AG04450 (cell line): ENCODE measurements at regions of chr13 and their contacts with region 1.

Region 1: GRCh38 chr13:100721885-100722512 is 47.4 kb upstream of the TMTC4 start:
- DNase-seq: peak; percentile 39
- H3K4me3 ChIP-seq: no peak overlapping the region
- H3K27ac ChIP-seq: no peak overlapping the region
- H3K27me3 ChIP-seq: no peaks in the 10 kb centered on the region
- CTCF ChIP-seq: peak; percentile 78

Region 2: GRCh38 chr13:100707818-100708740 is 13.9 kb before region 1 on chr13:
- CTCF ChIA-PET with region 1: interaction called, 10 read pairs
- POLR2A ChIA-PET with region 1: no interaction called
- DNase-seq: no peak
- H3K4me3 ChIP-seq: no peak overlapping the region
- H3K27ac ChIP-seq: no peak overlapping the region
- H3K27me3 ChIP-seq: peaks cover 2% of the 10 kb centered on the region
- CTCF ChIP-seq: no peak

Region 3: GRCh38 chr13:100734194-100734720 is 12.3 kb after region 1 on chr13:
- CTCF ChIA-PET with region 1: interaction called, 15 read pairs
- POLR2A ChIA-PET with region 1: no interaction called
- DNase-seq: no peak
- H3K4me3 ChIP-seq: no peak overlapping the region
- H3K27ac ChIP-seq: no peak overlapping the region
- H3K27me3 ChIP-seq: no peaks in the 10 kb centered on the region
- CTCF ChIP-seq: no peak

Region 4: GRCh38 chr13:100859861-100860260 is 137.9 kb after region 1 on chr13:
- CTCF ChIA-PET with region 1: no interaction called
- POLR2A ChIA-PET with region 1: no interaction called
- DNase-seq: no peak
- H3K4me3 ChIP-seq: no peak overlapping the region
- H3K27ac ChIP-seq: no peak overlapping the region
- H3K27me3 ChIP-seq: no peaks in the 10 kb centered on the region
- CTCF ChIP-seq: no peak

Region 5: GRCh38 chr13:100941377-100942368 is 219.7 kb after region 1 on chr13:
- CTCF ChIA-PET with region 1: no interaction called
- POLR2A ChIA-PET with region 1: no interaction called
- DNase-seq: no peak
- H3K4me3 ChIP-seq: no peak overlapping the region
- H3K27ac ChIP-seq: no peak overlapping the region
- H3K27me3 ChIP-seq: no peaks in the 10 kb centered on the region
- CTCF ChIP-seq: no peak

Region 6: DNA sequence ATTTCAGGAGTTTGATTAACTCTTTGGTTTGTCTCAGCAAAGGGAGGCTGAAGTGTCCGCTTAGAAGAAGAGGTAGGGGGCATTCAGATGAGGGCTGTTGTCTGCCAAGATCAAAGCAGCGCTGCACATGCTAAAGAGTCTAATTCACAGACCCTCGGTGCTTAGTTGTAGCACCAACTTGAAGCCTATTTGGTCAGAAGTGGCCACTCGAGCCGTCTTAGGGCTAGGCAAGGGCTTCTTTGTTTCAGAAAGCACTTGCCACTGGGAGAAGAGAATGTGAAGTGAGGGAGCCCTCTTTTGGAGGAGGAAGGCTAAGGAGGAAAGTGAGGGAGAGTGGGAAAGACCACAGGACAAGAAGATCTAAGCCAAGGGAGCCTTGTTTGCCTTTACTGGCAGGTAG is 266.0 kb after region 1 on chr13:
- CTCF ChIA-PET with region 1: interaction called, 12 read pairs
- POLR2A ChIA-PET with region 1: no interaction called
- DNase-seq: peak; percentile 16
- H3K4me3 ChIP-seq: no peak overlapping the region
- H3K27ac ChIP-seq: no peak overlapping the region
- H3K27me3 ChIP-seq: no peaks in the 10 kb centered on the region
- CTCF ChIP-seq: peak; percentile 55

Region 7: DNA sequence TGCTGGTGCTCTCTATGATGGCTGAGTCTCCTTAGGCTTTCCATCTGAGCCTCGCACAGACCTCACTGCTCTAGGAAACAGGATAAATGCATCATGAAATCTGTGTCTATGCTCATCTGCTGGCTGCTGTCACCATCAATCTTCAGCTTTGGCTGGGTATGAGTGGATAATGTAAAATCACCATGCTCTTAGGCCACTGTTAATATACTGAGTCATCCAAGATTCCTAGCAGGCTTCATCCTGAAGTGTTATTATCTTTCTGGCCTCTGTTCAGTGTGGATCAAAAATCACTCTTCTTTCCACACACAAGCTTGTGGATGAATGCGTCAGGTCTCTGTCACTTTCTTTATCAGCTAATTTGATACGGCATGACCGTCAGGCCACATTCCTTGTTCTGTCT is 376.9 kb after region 1 on chr13:
- CTCF ChIA-PET with region 1: interaction called, 29 read pairs
- POLR2A ChIA-PET with region 1: no interaction called
- DNase-seq: no peak
- H3K4me3 ChIP-seq: no peak overlapping the region
- H3K27ac ChIP-seq: no peak overlapping the region
- H3K27me3 ChIP-seq: no peaks in the 10 kb centered on the region
- CTCF ChIP-seq: no peak

Region 8: DNA sequence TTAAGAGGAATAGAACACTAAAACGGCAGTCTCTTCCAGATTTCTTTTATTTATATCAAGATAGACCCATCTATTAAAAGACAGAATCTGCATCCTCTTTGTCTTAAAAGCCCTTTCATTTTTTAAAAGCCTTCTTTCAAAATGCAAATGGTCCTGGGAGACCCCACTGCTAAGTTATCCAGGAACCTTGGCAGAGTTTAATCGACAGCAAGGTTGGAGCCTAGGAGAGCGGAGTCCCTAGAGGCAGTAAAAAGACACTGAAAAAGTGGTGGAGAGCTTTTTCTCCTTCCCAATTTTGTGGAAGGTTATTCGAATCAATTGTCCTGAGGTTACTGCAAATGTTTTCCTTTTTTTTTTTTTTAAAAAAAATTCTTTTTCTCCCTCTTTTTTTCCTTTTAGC is 399.6 kb after region 1 on chr13:
- CTCF ChIA-PET with region 1: interaction called, 35 read pairs
- POLR2A ChIA-PET with region 1: no interaction called
- DNase-seq: no peak
- H3K4me3 ChIP-seq: no peak overlapping the region
- H3K27ac ChIP-seq: no peak overlapping the region
- H3K27me3 ChIP-seq: no peaks in the 10 kb centered on the region
- CTCF ChIP-seq: no peak

Region 9: DNA sequence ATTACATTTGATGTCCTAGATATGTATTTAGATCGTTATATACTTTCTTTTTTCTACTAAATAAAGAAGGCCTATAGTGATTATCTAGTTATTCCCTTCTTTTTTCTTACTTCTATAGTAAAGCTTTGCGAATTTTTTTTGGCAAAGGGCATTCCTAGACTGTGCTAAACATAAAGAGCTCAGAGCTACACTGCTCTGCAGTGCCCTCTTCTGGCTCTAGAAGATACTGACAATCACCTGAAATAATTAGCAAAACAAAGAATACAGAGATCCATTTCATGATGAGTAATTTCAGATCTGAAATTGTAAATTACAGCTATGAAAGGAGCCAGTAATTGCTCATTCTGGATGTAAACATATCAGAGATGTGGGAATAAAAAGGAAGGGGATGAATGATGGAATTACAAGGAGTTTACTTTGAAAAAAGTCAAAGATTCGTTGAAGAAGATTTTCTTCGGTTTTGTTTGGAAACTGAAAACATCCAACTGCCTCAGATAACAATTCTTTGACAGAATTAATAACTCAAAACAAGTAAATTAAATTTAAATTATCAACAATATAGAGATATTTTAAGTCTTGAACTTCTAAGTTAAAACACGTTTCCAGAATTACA is 405.8 kb after region 1 on chr13:
- CTCF ChIA-PET with region 1: interaction called, 35 read pairs
- POLR2A ChIA-PET with region 1: no interaction called
- DNase-seq: peak; percentile 13
- H3K4me3 ChIP-seq: no peak overlapping the region
- H3K27ac ChIP-seq: no peak overlapping the region
- H3K27me3 ChIP-seq: no peaks in the 10 kb centered on the region
- CTCF ChIP-seq: peak; percentile 82